A673 (cell line): ENCODE measurements at regions of chr5 and their contacts with region 1.

Region 1: DNA sequence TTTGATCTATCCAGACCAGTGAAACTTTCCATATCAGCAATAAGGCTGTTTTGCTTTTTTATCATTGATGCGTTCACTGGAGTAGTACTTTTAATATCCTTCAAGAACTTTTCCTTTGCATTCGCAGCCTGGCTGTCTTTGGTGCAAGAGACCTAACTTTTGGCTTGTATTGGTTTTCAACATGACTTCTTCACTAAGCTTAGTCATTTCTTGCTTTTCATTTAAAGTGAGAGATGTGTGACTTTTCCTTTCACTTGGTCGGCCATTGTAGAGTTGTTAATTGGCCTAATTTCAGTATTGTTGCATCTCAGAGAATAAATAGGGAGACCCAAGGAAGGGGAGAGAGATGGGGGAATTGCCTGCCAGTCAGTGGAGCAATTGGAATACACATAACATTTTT is 26.4 kb upstream of the CMYA5 start:
- DNase-seq: no peak
- H3K4me3 ChIP-seq: no peak overlapping the region
- H3K27ac ChIP-seq: no peak overlapping the region
- H3K4me1 ChIP-seq: no peaks in the 10 kb centered on the region
- H3K27me3 ChIP-seq: no peaks in the 10 kb centered on the region
- CTCF ChIP-seq: no peak

Region 2: GRCh38 chr5:79552984-79553383 is 110.2 kb before region 1 on chr5:
- CTCF ChIA-PET with region 1: no interaction called
- POLR2A ChIA-PET with region 1: no interaction called
- intact Hi-C with region 1: no loop called
- DNase-seq: peak; percentile 88
- H3K4me3 ChIP-seq: no peak overlapping the region
- H3K27ac ChIP-seq: no peak overlapping the region
- H3K4me1 ChIP-seq: peaks cover 19% of the 10 kb centered on the region
- H3K27me3 ChIP-seq: peaks cover 12% of the 10 kb centered on the region
- CTCF ChIP-seq: no peak

Region 3: GRCh38 chr5:79636981-79637733 is 26.1 kb before region 1 on chr5:
- CTCF ChIA-PET with region 1: no interaction called
- POLR2A ChIA-PET with region 1: interaction called, 18 read pairs
- intact Hi-C with region 1: no loop called
- DNase-seq: no peak
- H3K4me3 ChIP-seq: no peak overlapping the region
- H3K27ac ChIP-seq: no peak overlapping the region
- H3K4me1 ChIP-seq: peaks cover 15% of the 10 kb centered on the region
- H3K27me3 ChIP-seq: no peaks in the 10 kb centered on the region
- CTCF ChIP-seq: no peak